ENCODE measurements at regions of chr19 and their contacts with region 1.

Region 1: GRCh38 chr19:11435058-11435832 is at the starts of genes ODAD3 and PRKCSH:
- DNase-seq: peak; percentile 99
- ATAC-seq: peak; percentile 91
- H3K4me3 ChIP-seq: peak within 1 kb of the TSS; percentile 70 to 98
- H3K27ac ChIP-seq: peak within 1 kb of the TSS; percentile 70
- H3K4me1 ChIP-seq: peaks cover 11 to 17% of the 10 kb centered on the region in 2 experiments
- H3K27me3 ChIP-seq: no peaks in the 10 kb centered on the region
- CTCF ChIP-seq: peak; percentile 30 to 82 (median 79); a peak in 4 of 6 replicates
- POLR2A ChIP-seq: peak; percentile 59
- RAD21 ChIP-seq: no peak; the same call in 1 of the 2 replicates
- total RNA-seq, gene ODAD3: 0.52 TPM
- total RNA-seq, gene PRKCSH: 425 TPM

Region 2: GRCh38 chr19:11242864-11243797 is 192.1 kb before region 1 on chr19:
- CTCF ChIA-PET with region 1: no interaction called
- POLR2A ChIA-PET with region 1: no interaction called
- RAD21 ChIA-PET with region 1: no interaction called
- intact Hi-C with region 1: no loop called
- DNase-seq: peak; percentile 47
- ATAC-seq: peak; percentile 99
- H3K4me3 ChIP-seq: no peak overlapping the region
- H3K27ac ChIP-seq: no peak overlapping the region
- H3K4me1 ChIP-seq: peaks cover 4 to 5% of the 10 kb centered on the region in 2 experiments; a peak in 3 of 4 replicates
- H3K27me3 ChIP-seq: no peaks in the 10 kb centered on the region
- CTCF ChIP-seq: peak in 2 of 3 experiments; percentile 79 to 82; a peak in 4 of 6 replicates
- POLR2A ChIP-seq: no peak
- RAD21 ChIP-seq: peak; percentile 22

Region 3: GRCh38 chr19:11293433-11294389 is 141.5 kb before region 1 on chr19:
- CTCF ChIA-PET with region 1: interaction called, 4 read pairs
- POLR2A ChIA-PET with region 1: no interaction called
- RAD21 ChIA-PET with region 1: no interaction called
- intact Hi-C with region 1: loop called (anchors 5 kb)
- DNase-seq: peak; percentile 79
- ATAC-seq: peak; percentile 99
- H3K4me3 ChIP-seq: peak overlapping the region; percentile 36 to 51
- H3K27ac ChIP-seq: peak overlapping the region; percentile 39
- H3K4me1 ChIP-seq: peaks cover 18 to 30% of the 10 kb centered on the region in 2 experiments
- H3K27me3 ChIP-seq: no peaks in the 10 kb centered on the region
- CTCF ChIP-seq: peak; percentile 92 to 96 (median 95)
- POLR2A ChIP-seq: no peak
- RAD21 ChIP-seq: peak; percentile 99

Region 4: GRCh38 chr19:11418549-11419506 is 16.4 kb before region 1 on chr19 and contains the start of gene RGL3:
- CTCF ChIA-PET with region 1: interaction called, 14 read pairs
- POLR2A ChIA-PET with region 1: interaction called, 6 read pairs
- RAD21 ChIA-PET with region 1: no interaction called
- intact Hi-C with region 1: no loop called
- DNase-seq: no peak
- ATAC-seq: peak; percentile 84
- H3K4me3 ChIP-seq: peak within 1 kb of the TSS; percentile 93 to 99
- H3K27ac ChIP-seq: peak within 1 kb of the TSS; percentile 99
- H3K4me1 ChIP-seq: peaks cover 9 to 16% of the 10 kb centered on the region in 2 experiments
- H3K27me3 ChIP-seq: no peaks in the 10 kb centered on the region
- CTCF ChIP-seq: no peak
- POLR2A ChIP-seq: no peak
- RAD21 ChIP-seq: no peak
- total RNA-seq, gene RGL3: 99.2 TPM

Measured in HCT116 (cell line).